Activated CD4-positive, alpha-beta memory T cell treated with anti-CD3 and anti-CD28 coated beads, Interleukin-2, amount 10 ng/mL, durations not matched to agents 7 days and 5 days (primary cell): ENCODE measurements at regions of chr3 and their contacts with region 1.

Region 1: GRCh38 chr3:50245831-50246516 is 10.0 kb downstream of the GNAI2 start:
- DNase-seq: peak; percentile 94
- H3K4me3 Mint-ChIP-seq: peak overlapping the region; percentile 78
- H3K27ac Mint-ChIP-seq: peak overlapping the region; percentile 94
- H3K4me1 Mint-ChIP-seq: peaks cover 91% of the 10 kb centered on the region
- H3K27me3 Mint-ChIP-seq: no peaks in the 10 kb centered on the region

Region 2: GRCh38 chr3:50192689-50193141 is 53.3 kb before region 1 on chr3:
- CTCF ChIA-PET with region 1: interaction called, 35 read pairs
- POLR2A ChIA-PET with region 1: interaction called, 6 read pairs
- DNase-seq: peak; percentile 85
- H3K4me3 Mint-ChIP-seq: no peak overlapping the region
- H3K27ac Mint-ChIP-seq: no peak overlapping the region
- H3K4me1 Mint-ChIP-seq: peaks cover 12% of the 10 kb centered on the region
- H3K27me3 Mint-ChIP-seq: peaks cover 25% of the 10 kb centered on the region

Region 3: GRCh38 chr3:50221411-50222168 is 24.4 kb before region 1 on chr3:
- CTCF ChIA-PET with region 1: interaction called, 212 read pairs
- POLR2A ChIA-PET with region 1: interaction called, 117 read pairs
- DNase-seq: no peak
- H3K4me3 Mint-ChIP-seq: no peak overlapping the region
- H3K27ac Mint-ChIP-seq: peak overlapping the region; percentile 16
- H3K4me1 Mint-ChIP-seq: peaks cover 13% of the 10 kb centered on the region
- H3K27me3 Mint-ChIP-seq: peaks cover 15% of the 10 kb centered on the region

Region 4: DNA sequence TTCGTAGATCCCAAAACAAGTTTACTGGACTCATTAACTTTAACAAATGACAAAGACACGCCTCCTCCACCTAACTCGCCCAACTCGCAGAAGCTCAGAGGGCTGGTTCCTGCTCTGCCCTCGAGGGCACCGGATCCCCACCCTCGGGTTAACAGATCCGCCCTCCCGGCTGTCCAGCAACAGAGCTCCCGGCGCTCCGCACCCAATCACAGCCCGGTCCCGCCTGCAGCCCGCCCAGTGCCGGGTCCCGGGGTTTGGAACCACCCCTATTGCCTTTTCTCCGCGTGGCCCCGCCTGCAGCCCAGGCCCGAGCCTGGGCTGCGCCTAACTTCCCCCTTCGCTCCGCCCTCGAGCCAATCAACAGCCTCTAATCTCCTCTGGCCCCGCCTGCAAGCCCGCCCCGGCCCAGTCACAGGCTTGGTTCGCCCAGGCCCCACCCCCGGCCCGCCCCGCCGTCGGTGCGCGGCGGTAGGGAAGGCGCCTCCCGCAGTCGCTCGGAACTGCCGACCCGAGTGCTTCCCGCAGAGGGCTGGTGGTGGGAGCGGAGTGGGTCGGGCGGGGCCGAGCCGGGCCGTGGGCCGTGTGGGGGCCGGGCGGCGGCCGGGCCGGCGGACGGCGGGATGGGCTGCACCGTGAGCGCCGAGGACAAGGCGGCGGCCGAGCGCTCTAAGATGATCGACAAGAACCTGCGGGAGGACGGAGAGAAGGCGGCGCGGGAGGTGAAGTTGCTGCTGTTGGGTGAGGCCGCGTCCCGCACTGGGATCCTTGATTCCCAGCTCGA is 10.1 kb before region 1 on chr3 and contains the start of gene GNAI2:
- CTCF ChIA-PET with region 1: interaction called, 212 read pairs
- POLR2A ChIA-PET with region 1: interaction called, 117 read pairs
- DNase-seq: peak; percentile 99
- H3K4me3 Mint-ChIP-seq: peak within 1 kb of the TSS; percentile 99
- H3K27ac Mint-ChIP-seq: peak within 1 kb of the TSS; percentile 98
- H3K4me1 Mint-ChIP-seq: peaks cover 42% of the 10 kb centered on the region
- H3K27me3 Mint-ChIP-seq: no peaks in the 10 kb centered on the region
- total RNA-seq, gene GNAI2: 493 to 519 TPM

Region 5: GRCh38 chr3:50260027-50260941 is 14.3 kb after region 1 on chr3:
- CTCF ChIA-PET with region 1: interaction called, 29 read pairs
- POLR2A ChIA-PET with region 1: interaction called, 20 read pairs
- DNase-seq: peak; percentile 87
- H3K4me3 Mint-ChIP-seq: peak overlapping the region; percentile 60
- H3K27ac Mint-ChIP-seq: no peak overlapping the region
- H3K4me1 Mint-ChIP-seq: peaks cover 12% of the 10 kb centered on the region
- H3K27me3 Mint-ChIP-seq: no peaks in the 10 kb centered on the region